PC-9 (cell line): ENCODE measurements at regions of chr13 and their contacts with region 1.

Region 1: DNA sequence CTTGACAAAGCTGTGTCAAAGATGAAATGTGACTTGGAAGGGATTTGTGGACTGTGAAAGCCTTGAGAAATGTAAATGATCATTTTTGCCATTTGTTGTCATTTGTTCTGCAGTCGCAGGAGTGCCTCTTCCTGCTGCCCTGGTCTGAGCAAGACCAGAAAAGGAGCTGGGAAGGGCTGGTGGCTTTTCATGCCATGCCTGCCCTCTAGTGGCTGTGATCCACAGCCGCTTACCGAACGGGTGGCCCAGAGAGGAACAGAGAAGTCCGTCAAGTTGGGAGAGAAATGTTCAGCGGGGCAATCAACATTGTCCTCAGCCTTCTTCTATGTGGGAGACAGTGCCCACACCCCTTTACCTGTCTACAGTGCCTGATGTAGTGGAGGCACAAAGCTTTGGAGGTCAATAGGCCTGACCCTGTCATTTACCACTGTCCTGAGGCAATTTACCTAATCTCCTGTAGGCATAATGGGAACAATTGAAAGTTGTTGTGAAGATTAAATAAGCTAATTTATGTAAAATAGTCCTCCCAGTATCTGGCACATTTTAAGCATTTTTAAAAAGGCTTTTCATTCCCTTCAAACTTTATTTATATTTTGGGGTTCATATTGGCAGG is 224.4 kb downstream of the B3GLCT start:
- DNase-seq: peak; percentile 41 to 59
- H3K4me3 ChIP-seq: no peak overlapping the region
- H3K27ac ChIP-seq: no peak overlapping the region
- H3K4me1 ChIP-seq: no peaks in the 10 kb centered on the region
- H3K27me3 ChIP-seq: peaks cover 26% of the 10 kb centered on the region
- CTCF ChIP-seq: peak; percentile 89

Region 2: DNA sequence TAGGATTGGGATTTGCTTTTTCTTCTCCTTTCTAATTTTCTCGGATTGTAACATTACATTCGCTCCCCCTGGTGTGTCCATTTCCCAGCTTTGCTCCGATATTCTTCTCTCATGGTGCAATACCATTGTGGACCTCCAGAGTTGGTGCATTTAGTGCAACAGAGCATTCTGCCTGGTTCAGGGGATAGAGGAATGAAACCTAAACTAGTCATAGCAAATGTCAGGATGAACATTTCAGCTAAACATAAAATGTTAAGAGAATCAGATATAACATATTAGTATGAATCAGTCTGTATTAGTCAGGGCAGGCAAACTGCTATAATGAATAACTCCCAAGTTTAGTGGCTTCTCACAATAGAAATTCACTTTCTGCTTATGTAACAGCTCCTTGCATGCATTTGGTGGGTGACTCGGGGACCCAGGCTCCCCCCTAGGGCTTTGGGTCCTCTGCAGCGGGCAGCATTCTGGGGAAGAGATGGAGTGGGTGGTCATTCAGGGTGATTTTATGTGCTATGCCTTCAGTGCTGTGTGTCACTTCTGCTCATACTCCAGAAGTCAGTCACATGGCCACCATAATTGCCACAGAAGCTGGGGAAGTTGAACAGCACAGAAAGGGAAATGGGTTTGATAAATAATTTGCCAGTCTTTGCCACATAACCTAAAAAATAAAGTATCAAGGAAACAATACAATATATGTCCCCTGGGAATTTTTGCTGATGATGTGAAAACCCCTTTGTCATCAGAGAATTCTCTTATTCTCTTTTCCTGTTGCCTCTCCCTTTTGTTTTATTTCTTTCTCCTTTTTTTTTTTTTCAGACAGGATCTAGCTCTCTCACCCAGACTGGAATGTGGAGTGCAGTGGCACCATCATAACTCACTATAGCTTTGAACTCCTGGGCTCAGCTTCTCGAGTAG is 373.5 kb before region 1 on chr13:
- CTCF ChIA-PET with region 1: no interaction called
- POLR2A ChIA-PET with region 1: no interaction called
- intact Hi-C with region 1: loop called (anchors 5 kb)
- DNase-seq: no peak
- H3K4me3 ChIP-seq: no peak overlapping the region
- H3K27ac ChIP-seq: no peak overlapping the region
- H3K4me1 ChIP-seq: peaks cover 24% of the 10 kb centered on the region
- H3K27me3 ChIP-seq: no peaks in the 10 kb centered on the region
- CTCF ChIP-seq: no peak; the same call in 1 of the 2 replicates

Region 3: GRCh38 chr13:31119966-31120700 is 304.1 kb before region 1 on chr13:
- CTCF ChIA-PET with region 1: no interaction called
- POLR2A ChIA-PET with region 1: no interaction called
- intact Hi-C with region 1: no loop called
- DNase-seq: peak in 1 of 2 experiments; percentile 36
- H3K4me3 ChIP-seq: no peak overlapping the region
- H3K27ac ChIP-seq: no peak overlapping the region
- H3K4me1 ChIP-seq: no peaks in the 10 kb centered on the region
- H3K27me3 ChIP-seq: peaks cover 58% of the 10 kb centered on the region
- CTCF ChIP-seq: no peak

Region 4: GRCh38 chr13:31161828-31162590 is 262.2 kb before region 1 on chr13 and contains the start of gene HSPH1:
- CTCF ChIA-PET with region 1: no interaction called
- POLR2A ChIA-PET with region 1: no interaction called
- intact Hi-C with region 1: loop called (anchors 5 kb)
- DNase-seq: peak; percentile 94 to 96
- H3K4me3 ChIP-seq: peak within 1 kb of the TSS; percentile 67
- H3K27ac ChIP-seq: peak within 1 kb of the TSS; percentile 58
- H3K4me1 ChIP-seq: peaks cover 40% of the 10 kb centered on the region
- H3K27me3 ChIP-seq: no peaks in the 10 kb centered on the region
- CTCF ChIP-seq: no peak
- total RNA-seq, gene HSPH1: 61.8 and 105 TPM in 2 replicates

Region 5: DNA sequence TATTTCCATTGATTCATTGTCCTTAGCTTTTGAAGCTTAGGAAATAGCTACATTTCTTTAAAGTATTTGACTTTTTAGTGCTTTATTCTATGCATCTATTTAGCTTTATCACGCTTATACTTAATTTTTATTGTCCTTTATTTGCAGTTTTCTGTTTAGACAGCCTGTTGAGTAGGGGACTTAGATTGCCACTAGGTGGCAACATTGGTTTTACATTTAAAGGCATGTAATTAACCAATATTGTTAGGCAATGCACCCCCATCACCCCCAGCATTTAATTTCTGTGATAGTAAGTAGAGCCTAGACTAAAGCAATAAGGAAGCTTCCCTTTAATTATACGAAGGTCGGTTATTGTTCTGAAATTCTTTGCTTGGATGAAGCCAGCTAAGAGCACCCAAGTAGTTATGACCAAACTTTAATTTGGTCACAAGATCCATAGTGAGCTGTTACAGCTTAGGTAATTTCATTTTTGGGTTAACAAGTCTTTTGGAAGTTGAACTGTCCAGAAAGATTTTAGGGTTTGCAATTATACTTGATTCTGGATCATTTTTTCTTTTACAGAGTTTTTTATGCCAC is 187.9 kb before region 1 on chr13:
- CTCF ChIA-PET with region 1: interaction called, 4 read pairs
- POLR2A ChIA-PET with region 1: no interaction called
- intact Hi-C with region 1: loop called (anchors 1 kb)
- DNase-seq: peak in 1 of 2 experiments; percentile 2
- H3K4me3 ChIP-seq: no peak overlapping the region
- H3K27ac ChIP-seq: no peak overlapping the region
- H3K4me1 ChIP-seq: no peaks in the 10 kb centered on the region
- H3K27me3 ChIP-seq: no peaks in the 10 kb centered on the region
- CTCF ChIP-seq: peak; percentile 88